Head of caudate nucleus (tissue), 42 donors: ENCODE measurements at regions of chr2 and their contacts with region 1.

Region 1: DNA sequence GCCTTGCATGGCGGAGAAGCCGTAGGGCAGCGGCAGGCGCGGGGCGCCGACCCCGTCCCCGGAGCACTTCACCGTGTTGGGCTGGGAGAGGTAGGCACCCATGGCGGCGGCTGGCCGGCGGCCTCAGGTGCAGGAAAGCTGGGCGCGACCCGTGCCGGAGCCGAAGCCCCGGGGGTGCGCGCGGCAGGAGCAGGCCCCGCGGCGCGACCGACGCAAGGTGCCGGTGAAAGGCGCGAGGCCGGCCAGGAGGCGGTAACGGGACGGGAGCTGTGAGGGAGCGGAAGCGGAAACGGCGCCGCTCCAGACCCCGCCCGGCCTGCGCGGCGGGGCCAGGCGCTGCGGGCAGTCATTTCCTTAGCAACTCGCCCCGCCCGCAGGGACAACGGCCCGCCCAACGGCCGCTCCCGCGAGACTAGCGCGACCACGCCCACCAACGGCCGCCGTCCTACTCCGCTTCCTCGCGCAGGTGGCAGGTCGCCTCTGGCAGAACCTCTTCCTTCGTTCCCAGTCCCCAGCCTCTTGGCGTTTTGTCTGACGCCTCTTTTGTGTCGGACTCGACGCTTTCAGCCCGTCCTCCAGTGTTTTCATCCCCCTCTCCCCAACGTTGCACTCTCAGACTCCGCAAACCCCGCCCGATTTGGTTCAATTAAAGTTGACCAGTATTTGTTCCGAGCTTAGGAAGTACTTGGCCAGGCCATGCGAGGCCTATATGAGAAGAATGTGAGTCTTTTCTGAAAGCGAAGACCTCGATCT is at the start of gene PPM1G:
- DNase-seq: peak; percentile 90 to 99 (median 98)

Region 2: GRCh38 chr2:27316655-27317411 is 92.7 kb before region 1 on chr2:
- intact Hi-C with region 1: no loop called
- DNase-seq: peak; percentile 15 to 89 (median 64)

Region 3: DNA sequence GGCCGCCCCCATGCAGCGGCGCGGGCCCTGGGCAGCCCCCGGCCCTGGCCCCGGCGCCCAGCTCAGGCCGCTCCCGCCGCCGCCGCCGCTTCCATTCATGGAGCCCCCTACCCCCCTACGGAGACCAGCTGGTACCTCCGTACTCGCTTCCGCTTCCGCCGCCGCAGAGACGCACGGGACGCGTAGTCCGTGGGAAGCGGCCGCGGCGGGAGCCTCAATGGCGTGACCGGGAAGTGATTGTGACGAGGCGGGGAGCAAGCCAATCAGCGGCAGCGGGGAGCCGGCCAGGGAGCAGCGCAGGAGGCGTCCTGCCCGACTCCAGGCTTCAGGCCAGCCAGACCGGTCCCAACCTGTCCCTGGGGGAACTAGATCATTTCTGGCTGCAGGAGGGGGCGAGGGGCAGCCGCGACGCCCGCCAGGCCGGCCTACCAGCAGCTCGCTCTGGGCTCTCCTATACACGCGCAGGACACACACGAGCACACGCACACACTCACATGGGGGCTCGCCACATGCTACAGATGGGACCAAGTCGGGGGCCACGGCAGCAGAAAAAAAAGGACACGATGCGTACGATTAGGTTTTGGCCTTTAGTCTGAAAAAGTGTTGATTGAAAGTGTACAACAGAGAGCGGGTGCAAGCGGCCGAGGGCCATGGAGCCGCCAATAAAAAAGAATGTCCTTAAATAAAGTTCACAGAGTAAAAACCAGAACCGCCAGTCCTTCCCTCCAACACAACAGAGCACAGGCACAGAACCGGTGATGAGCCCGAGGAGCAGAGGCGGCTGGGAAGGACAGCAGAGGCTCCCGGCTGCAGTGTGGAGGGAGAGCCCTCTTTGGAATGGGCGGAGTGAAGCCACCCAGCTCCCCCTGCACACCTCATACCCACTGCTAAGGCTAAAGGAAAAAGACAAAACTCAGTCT is 28.6 kb before region 1 on chr2 and contains the start of gene ZNF513:
- intact Hi-C with region 1: loop called (anchors 1 kb)
- DNase-seq: peak; percentile 95 to 99 (median 98)